ENCODE measurements at regions of chr10 and their contacts with region 1.

Region 1: GRCh38 chr10:133565441-133566294 is at the start of gene SYCE1:
- DNase-seq: peak in 2 of 4 experiments; percentile 5 to 6
- ATAC-seq: peak; percentile 65
- H3K4me3 ChIP-seq: no peak within 1 kb of the TSS
- H3K27ac ChIP-seq: no peak within 1 kb of the TSS
- H3K4me1 ChIP-seq: peaks cover 0 to 9% of the 10 kb centered on the region in 2 experiments; a peak in 1 of 5 replicates
- H3K27me3 ChIP-seq: peaks cover 2 to 19% of the 10 kb centered on the region in 2 experiments; a peak in 1 of 5 replicates
- CTCF ChIP-seq: peak in 1 of 3 experiments; percentile 34; a peak in 2 of 6 replicates
- EP300 ChIP-seq: no peak
- POLR2A ChIP-seq: no peak
- RAD21 ChIP-seq: no peak
- polyA plus RNA-seq, gene SYCE1: not detected

Region 2: DNA sequence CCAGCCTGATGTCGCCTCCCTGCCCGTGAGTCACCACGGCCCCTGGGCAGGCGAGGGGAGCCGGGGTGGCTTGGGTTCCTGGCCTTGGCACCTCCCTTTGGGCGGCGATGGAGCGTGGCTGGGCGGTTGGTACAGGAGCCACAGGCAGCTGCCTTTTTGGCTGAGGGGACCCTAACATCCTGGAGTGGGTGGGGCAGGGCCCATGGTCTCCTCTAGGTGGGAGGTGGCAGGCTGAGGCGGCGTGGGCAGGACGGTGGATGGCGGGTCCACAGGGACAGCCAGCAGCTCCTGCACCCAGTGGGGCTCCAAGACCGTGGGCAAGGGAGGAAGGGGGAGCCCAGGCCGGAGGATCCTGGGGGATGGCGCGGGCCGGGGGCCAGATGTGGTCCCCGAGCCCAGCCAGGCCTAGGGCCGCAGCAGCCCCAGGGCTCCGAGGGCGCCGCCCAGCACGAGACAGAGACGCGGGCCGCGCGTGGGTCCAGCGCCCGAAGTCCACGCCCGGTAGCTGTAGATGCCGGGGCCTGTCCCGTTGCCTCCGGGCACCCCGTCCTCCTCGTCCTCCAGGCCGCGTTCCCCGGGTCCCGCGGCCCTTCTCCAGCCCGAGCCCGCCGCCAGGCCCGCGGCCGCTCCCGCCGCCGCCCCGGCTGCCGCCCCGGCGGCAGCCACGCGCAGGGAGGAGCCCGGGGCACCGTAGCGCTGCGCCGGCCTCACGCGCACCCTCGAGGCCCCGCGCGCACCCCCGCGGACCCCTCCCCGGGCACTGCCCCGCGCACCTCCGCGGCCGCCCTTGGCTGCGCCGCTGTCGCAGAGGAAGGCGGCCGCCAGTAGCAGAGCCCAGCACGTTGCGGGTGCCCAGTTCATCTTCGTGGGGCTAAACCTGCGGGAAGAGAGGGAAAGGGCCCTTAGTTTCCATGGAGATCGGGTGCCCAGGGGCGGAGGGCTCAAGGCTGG is 142.6 kb before region 1 on chr10:
- CTCF ChIA-PET with region 1: no interaction called
- POLR2A ChIA-PET with region 1: no interaction called
- in situ Hi-C with region 1: no loop called
- intact Hi-C with region 1: loop called (anchors 5 kb)
- DNase-seq: no peak
- ATAC-seq: no peak
- H3K4me3 ChIP-seq: no peak overlapping the region
- H3K27ac ChIP-seq: no peak overlapping the region
- H3K4me1 ChIP-seq: no peaks in the 10 kb centered on the region
- H3K27me3 ChIP-seq: no peaks in the 10 kb centered on the region
- CTCF ChIP-seq: no peak
- EP300 ChIP-seq: no peak
- POLR2A ChIP-seq: no peak
- RAD21 ChIP-seq: no peak